Posterior vena cava (tissue), 2 donors: ENCODE measurements at regions of chr14 and their contacts with region 1.

Region 1: DNA sequence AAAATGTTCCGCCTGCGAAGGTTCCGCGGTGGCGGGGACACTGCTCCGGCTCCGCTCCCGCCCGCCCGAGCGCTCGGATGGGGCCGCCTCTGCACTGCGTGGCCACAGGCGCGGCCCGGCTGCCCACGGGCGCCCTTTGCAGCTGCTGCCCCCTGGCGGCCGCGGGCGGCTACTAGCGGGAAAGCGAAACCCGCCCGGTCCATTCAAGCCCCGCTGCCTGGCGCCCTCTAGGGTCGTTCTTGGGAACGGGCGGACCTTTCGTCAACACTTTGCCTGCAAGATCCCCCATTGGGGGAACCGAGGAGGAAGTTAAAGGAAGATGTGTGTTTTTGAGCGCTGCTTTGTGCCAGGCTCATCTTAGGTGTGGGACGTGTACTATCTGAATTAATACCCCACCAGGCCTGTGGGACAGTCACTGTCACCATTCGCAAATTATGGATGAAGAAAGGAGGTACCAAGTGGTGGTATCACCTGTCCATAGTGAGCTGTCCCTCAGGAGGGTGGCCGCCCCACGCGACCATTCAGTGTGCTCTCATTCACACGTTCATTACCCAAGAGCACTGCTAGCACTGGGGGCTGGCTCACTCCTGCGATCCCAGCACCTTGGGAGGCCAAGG is 19.4 kb downstream of the GPR132 start:
- DNase-seq: peak; percentile 98

Region 2: GRCh38 chr14:104895786-104896661 is 149.8 kb before region 1 on chr14:
- intact Hi-C with region 1: loop called (anchors 2 to 10 kb)
- DNase-seq: peak; percentile 80

Region 3: GRCh38 chr14:104913435-104913834 is 132.4 kb before region 1 on chr14:
- intact Hi-C with region 1: no loop called
- DNase-seq: no peak

Region 4: DNA sequence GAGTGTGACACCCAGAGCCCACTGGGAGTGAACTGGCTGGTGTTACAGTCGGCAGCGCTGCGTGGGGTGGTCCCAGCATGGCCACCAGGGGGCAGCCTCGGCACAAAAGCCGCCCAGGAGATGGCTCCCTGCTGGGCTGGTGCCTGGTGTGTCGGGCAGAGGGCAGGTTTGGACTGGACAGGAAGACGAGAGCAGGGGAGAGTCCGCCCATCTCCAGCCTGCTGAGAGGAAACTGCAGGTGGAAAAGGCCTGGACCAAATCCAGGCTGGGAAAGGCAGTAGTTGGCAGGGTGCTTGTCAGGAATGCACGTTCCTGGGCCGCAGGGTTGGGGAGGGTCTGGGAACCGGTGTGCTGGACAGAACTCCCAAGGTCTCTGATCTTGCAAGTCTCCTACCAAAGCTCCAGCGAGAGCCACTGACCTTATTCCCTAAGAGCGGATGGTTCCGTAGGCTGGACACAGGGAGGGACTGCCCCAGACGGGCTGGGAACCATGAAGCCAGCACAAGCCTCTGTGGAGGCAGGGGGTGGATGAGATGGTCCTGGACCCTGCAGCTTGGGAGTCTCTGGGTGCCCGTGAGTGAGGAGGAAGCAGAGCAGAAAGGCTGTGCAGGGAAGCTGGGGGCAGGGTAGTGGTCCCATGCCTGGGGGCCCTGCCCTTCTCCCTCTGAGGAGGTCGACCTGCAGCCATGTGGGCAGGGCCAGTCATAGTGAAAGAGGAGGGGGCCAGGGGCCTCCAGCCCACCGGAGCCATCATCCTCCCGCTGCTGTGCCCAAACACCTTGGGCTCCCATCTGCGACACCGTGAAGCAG is 69.4 kb before region 1 on chr14:
- intact Hi-C with region 1: loop called (anchors 2 kb)
- DNase-seq: peak; percentile 96